ENCODE measurements at regions of chr12 and their contacts with region 1.

Region 1: DNA sequence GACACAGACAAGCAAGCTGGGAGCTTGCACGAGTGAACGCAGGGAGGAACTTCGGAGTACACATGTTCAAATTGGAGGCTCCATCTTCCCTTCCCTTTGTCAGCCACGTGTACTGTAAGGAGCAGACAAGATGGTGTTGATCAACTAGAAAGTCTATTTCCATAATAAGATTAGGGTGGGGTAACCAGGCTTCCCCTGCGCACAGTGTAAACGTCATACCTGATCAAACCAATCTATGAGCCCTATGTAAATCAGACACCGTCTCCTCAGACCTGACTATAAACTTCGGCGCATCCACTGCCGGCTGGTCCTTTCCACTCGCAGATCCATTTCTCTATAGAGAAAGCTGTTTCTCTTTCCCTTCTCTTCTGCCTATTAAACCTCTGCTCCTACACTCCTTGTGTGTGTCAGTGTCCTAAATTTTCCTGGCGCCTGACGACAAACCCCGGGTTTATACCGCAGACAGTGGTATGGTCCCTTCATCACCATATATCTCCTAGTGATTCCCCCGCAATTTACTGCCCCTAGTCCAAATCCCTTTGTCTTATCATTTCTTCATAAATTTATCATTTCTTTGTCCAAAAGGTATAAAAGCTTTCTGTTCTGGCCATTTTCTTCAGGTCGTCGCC is 7.5 kb upstream of the ETFBKMT start:
- DNase-seq: no peak
- H3K4me3 ChIP-seq: no peak overlapping the region
- H3K4me3 Mint-ChIP-seq: peak overlapping the region in 4 of 7 donors; percentile 20 to 73 (median 52)
- H3K27ac ChIP-seq: no peak overlapping the region
- H3K27ac Mint-ChIP-seq: peak overlapping the region in 6 of 8 donors; percentile 34 to 93 (median 61)
- H3K4me1 ChIP-seq: peaks cover 4% of the 10 kb centered on the region
- H3K4me1 Mint-ChIP-seq: peaks cover 9 to 12% (median 11%) of the 10 kb centered on the region in 3 donors
- H3K27me3 ChIP-seq: no peaks in the 10 kb centered on the region
- H3K27me3 Mint-ChIP-seq: peaks cover 0 to 12% of the 10 kb centered on the region in 2 donors

Region 2: GRCh38 chr12:31089072-31089471 is 562.9 kb before region 1 on chr12:
- CTCF ChIA-PET with region 1: no interaction called
- POLR2A ChIA-PET with region 1: no interaction called
- DNase-seq: no peak
- H3K4me3 ChIP-seq: no peak overlapping the region
- H3K4me3 Mint-ChIP-seq: no peak overlapping the region
- H3K27ac ChIP-seq: no peak overlapping the region
- H3K27ac Mint-ChIP-seq: peak overlapping the region in 1 of 8 donors; percentile 63
- H3K4me1 ChIP-seq: no peaks in the 10 kb centered on the region
- H3K4me1 Mint-ChIP-seq: no peaks in the 10 kb centered on the region
- H3K27me3 ChIP-seq: no peaks in the 10 kb centered on the region
- H3K27me3 Mint-ChIP-seq: no peaks in the 10 kb centered on the region

Region 3: GRCh38 chr12:31682136-31682962 is 30.3 kb after region 1 on chr12:
- CTCF ChIA-PET with region 1: interaction called, 16 read pairs
- POLR2A ChIA-PET with region 1: interaction called, 4 read pairs
- DNase-seq: peak; percentile 49 to 77 (median 61)
- H3K4me3 ChIP-seq: no peak overlapping the region
- H3K4me3 Mint-ChIP-seq: peak overlapping the region in 5 of 7 donors; percentile 28 to 86 (median 68)
- H3K27ac ChIP-seq: no peak overlapping the region
- H3K27ac Mint-ChIP-seq: peak overlapping the region in 6 of 8 donors; percentile 55 to 90 (median 86)
- H3K4me1 ChIP-seq: peaks cover 3% of the 10 kb centered on the region
- H3K4me1 Mint-ChIP-seq: peaks cover 6 to 11% (median 7%) of the 10 kb centered on the region in 3 donors
- H3K27me3 ChIP-seq: no peaks in the 10 kb centered on the region
- H3K27me3 Mint-ChIP-seq: no peaks in the 10 kb centered on the region

Region 4: GRCh38 chr12:32061033-32061432 is 409.0 kb after region 1 on chr12:
- CTCF ChIA-PET with region 1: interaction called, 11 read pairs
- POLR2A ChIA-PET with region 1: interaction called, 3 read pairs
- DNase-seq: no peak
- H3K4me3 ChIP-seq: no peak overlapping the region
- H3K4me3 Mint-ChIP-seq: no peak overlapping the region
- H3K27ac ChIP-seq: no peak overlapping the region
- H3K27ac Mint-ChIP-seq: no peak overlapping the region
- H3K4me1 ChIP-seq: no peaks in the 10 kb centered on the region
- H3K4me1 Mint-ChIP-seq: peaks cover 4 to 7% (median 5%) of the 10 kb centered on the region in 3 donors
- H3K27me3 ChIP-seq: no peaks in the 10 kb centered on the region
- H3K27me3 Mint-ChIP-seq: no peaks in the 10 kb centered on the region

Region 5: DNA sequence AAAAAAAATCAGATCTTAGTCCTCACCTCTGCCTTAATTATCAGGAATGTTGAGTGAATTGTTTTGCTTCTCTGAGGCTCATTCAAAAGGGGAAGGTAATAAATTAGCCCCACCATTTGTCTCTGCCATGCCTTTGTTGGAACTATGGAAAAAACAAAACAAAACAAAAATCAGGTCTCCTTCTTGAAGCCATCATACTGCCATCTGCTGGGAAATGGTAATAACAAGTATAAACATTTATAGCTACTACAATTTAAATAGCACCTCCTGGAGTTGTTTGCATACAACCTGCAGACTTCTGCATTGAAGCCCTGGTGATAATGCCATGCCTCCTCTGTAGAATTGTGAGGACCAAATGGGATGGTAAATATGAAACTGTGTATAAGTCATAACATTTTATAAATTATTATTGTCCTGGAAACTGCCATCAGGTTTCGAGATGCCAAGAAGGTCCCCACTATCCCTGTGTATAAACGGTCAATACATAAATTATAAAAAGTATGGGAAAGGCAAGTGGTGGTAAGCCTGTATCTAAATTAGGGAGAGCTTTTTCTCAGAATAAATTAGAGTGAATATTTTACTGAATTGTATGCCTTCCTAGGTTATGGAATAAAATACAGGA is 660.2 kb after region 1 on chr12:
- CTCF ChIA-PET with region 1: interaction called, 40 read pairs
- POLR2A ChIA-PET with region 1: no interaction called
- DNase-seq: peak in 2 of 5 donors; percentile 15 to 31
- H3K4me3 ChIP-seq: no peak overlapping the region
- H3K4me3 Mint-ChIP-seq: no peak overlapping the region
- H3K27ac ChIP-seq: no peak overlapping the region
- H3K27ac Mint-ChIP-seq: peak overlapping the region in 2 of 8 donors; percentile 13 to 63
- H3K4me1 ChIP-seq: no peaks in the 10 kb centered on the region
- H3K4me1 Mint-ChIP-seq: peaks cover 2 to 5% (median 4%) of the 10 kb centered on the region in 3 donors
- H3K27me3 ChIP-seq: no peaks in the 10 kb centered on the region
- H3K27me3 Mint-ChIP-seq: no peaks in the 10 kb centered on the region